ENCODE measurements at regions of chr6 and their contacts with region 1.

Region 1: GRCh38 chr6:44127186-44128019 is at the starts of genes MRPL14 and TMEM63B:
- DNase-seq: peak; percentile 89
- ATAC-seq: peak; percentile 87
- H3K4me3 Mint-ChIP-seq: peak within 1 kb of the TSS; percentile 93
- H3K27ac Mint-ChIP-seq: peak within 1 kb of the TSS; percentile 95
- H3K4me1 Mint-ChIP-seq: peaks cover 50% of the 10 kb centered on the region
- H3K27me3 Mint-ChIP-seq: no peaks in the 10 kb centered on the region
- CTCF ChIP-seq: no peak
- total RNA-seq, gene MRPL14: 40.5 and 45.5 TPM in 2 replicates
- total RNA-seq, gene TMEM63B: 12.3 and 13.9 TPM in 2 replicates

Region 2: DNA sequence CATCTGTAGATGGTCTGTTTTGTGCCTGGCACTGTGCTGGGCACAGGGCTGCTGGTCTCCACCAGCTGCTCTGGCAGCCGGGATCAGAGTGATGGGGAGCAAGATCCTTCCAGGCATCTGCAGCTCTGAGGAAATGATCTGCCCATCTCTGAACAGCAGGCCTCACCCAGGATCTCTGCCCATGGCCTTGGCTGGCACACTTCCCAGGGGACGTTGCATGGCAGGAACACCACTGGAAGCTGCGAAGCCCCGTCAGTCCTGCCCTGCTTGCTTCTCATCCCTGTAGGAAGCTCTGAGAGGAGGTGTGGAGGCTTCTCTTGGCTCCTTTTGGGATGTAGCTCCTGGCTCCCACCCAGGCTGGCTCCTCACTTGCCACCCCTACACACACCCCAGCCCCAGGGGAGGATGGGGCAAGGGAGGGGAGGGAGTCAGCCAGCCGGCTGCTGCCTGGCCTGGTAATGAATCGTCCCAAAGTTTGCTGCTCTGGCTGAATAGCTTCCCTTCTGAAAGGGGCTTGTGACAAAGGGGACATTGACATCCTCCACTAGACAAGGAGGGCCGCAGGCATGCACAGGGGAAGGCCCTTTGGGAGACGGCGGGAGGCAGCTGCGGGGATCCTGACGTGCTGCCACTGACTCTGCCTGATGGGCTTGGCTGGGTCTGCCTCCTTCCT is 248.4 kb before region 1 on chr6:
- CTCF ChIA-PET with region 1: no interaction called
- POLR2A ChIA-PET with region 1: no interaction called
- intact Hi-C with region 1: no loop called
- DNase-seq: no peak
- ATAC-seq: no peak
- H3K4me3 Mint-ChIP-seq: no peak overlapping the region
- H3K27ac Mint-ChIP-seq: no peak overlapping the region
- H3K4me1 Mint-ChIP-seq: no peaks in the 10 kb centered on the region
- H3K27me3 Mint-ChIP-seq: no peaks in the 10 kb centered on the region
- CTCF ChIP-seq: no peak

Region 3: DNA sequence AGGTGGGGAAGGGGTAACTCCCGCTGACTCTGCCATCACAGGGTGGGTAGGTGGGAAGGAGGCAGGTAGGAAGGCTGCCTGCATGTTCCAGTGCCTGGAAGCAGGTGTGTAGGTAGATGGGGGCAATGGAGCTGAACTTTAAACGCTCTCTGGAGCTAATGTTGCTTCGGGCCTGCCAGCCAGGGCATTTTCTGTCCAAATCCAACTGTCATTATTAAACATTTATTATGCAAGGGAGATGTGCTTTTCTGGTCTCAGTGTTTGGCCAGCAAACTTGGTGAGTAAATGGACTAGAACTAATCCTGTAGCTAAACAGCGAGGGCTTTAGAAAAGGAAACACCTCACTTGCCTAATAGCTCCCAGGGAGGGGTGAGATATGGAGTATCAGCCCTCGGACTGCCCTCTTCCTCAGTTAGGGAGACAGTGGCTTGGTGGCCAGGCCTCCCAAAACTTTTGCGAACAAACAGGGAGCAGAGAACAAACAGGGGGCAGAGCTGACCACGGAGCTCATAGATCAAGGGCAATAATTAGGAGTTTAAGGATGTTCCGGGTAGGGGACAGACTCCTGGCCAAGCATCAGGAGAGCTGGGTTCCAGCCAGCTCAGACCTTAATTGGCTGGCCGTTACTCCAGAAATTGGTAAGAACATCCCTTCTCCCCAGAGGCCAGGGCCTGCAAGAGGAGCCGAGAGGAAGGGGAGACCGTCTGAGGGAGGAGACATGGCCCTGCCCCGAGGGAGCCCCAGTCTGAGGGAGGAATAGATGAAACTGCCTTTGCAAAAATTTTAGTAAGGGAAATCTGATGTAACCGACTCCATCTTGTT is 226.3 kb before region 1 on chr6:
- CTCF ChIA-PET with region 1: no interaction called
- POLR2A ChIA-PET with region 1: no interaction called
- intact Hi-C with region 1: no loop called
- DNase-seq: no peak
- ATAC-seq: no peak
- H3K4me3 Mint-ChIP-seq: no peak overlapping the region
- H3K27ac Mint-ChIP-seq: no peak overlapping the region
- H3K4me1 Mint-ChIP-seq: no peaks in the 10 kb centered on the region
- H3K27me3 Mint-ChIP-seq: peaks cover 4% of the 10 kb centered on the region
- CTCF ChIP-seq: no peak

Region 4: GRCh38 chr6:44151348-44152108 is 24.1 kb after region 1 on chr6:
- CTCF ChIA-PET with region 1: interaction called, 3 read pairs
- POLR2A ChIA-PET with region 1: interaction called, 4 read pairs
- intact Hi-C with region 1: loop called (anchors 2 kb)
- DNase-seq: peak; percentile 78
- ATAC-seq: peak; percentile 92
- H3K4me3 Mint-ChIP-seq: no peak overlapping the region
- H3K27ac Mint-ChIP-seq: no peak overlapping the region
- H3K4me1 Mint-ChIP-seq: peaks cover 5% of the 10 kb centered on the region
- H3K27me3 Mint-ChIP-seq: no peaks in the 10 kb centered on the region
- CTCF ChIP-seq: peak; percentile 87

Region 5: GRCh38 chr6:44192428-44193041 is 65.1 kb after region 1 on chr6:
- CTCF ChIA-PET with region 1: no interaction called
- POLR2A ChIA-PET with region 1: no interaction called
- intact Hi-C with region 1: no loop called
- DNase-seq: no peak
- ATAC-seq: no peak
- H3K4me3 Mint-ChIP-seq: no peak overlapping the region
- H3K27ac Mint-ChIP-seq: no peak overlapping the region
- H3K4me1 Mint-ChIP-seq: no peaks in the 10 kb centered on the region
- H3K27me3 Mint-ChIP-seq: peaks cover 7% of the 10 kb centered on the region
- CTCF ChIP-seq: no peak

Region 6: DNA sequence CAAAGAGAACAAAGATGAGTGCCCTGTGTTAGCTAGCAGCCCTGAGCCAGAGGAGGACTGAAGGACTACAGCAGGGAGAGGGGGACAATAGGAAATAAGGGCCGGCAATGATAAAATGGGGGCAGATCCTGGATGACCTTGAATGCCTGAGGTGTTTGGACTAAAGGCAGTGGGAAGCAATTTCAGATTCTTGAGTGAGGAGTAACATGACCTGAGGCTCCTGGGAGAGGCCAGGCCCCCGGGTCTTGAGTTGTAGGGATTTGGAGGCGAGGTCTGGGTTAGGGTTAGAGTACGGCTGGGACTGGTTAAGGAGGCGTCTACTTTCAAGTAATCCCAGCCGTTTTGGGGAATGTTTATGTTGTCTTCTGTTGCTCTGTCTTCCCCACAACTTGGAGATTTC is 103.5 kb after region 1 on chr6:
- CTCF ChIA-PET with region 1: no interaction called
- POLR2A ChIA-PET with region 1: no interaction called
- intact Hi-C with region 1: no loop called
- DNase-seq: no peak
- ATAC-seq: no peak
- H3K4me3 Mint-ChIP-seq: no peak overlapping the region
- H3K27ac Mint-ChIP-seq: no peak overlapping the region
- H3K4me1 Mint-ChIP-seq: no peaks in the 10 kb centered on the region
- H3K27me3 Mint-ChIP-seq: no peaks in the 10 kb centered on the region
- CTCF ChIP-seq: no peak

Region 7: GRCh38 chr6:44312901-44313788 is 185.7 kb after region 1 on chr6 and contains the start of gene AARS2:
- CTCF ChIA-PET with region 1: no interaction called
- POLR2A ChIA-PET with region 1: no interaction called
- intact Hi-C with region 1: loop called (anchors 1 kb)
- DNase-seq: peak; percentile 94
- ATAC-seq: peak; percentile 96
- H3K4me3 Mint-ChIP-seq: peak within 1 kb of the TSS; percentile 96
- H3K27ac Mint-ChIP-seq: peak within 1 kb of the TSS; percentile 91
- H3K4me1 Mint-ChIP-seq: peaks cover 14% of the 10 kb centered on the region
- H3K27me3 Mint-ChIP-seq: peaks cover 6% of the 10 kb centered on the region
- CTCF ChIP-seq: peak; percentile 85
- total RNA-seq, gene AARS2: 19.1 and 22.4 TPM in 2 replicates